ENCODE measurements at regions of chr1 and their contacts with region 1.

Region 1: DNA sequence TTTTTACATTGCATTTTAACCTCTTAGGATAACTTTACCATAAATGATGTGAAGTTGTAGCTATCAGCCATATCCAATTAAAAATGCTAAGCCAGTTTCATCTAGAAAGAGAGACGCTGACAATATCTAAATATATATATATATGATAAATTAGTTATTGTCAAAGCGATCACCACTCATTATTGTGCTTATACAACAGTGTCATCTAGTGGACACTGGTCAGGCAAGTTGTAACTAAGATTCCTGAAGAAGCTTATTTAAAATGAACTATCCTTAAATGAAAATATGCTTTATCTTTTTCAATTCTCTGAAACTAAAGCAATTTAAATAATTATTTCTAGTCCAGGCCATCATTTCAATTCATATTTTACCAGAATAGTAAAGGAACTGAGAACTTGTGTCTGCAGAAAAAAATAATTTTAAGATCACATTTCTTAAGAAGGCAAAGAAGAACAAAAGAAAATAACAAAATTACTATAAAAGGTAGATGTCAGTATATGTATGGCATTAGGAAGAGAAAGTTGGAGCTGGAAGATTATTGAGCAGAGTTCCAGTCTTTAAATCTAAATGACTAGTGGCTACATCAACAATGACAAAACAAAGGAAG is 193.3 kb upstream of the SNX7 start:
- DNase-seq: no peak
- H3K4me3 Mint-ChIP-seq: no peak overlapping the region
- H3K27ac Mint-ChIP-seq: no peak overlapping the region
- H3K4me1 Mint-ChIP-seq: no peaks in the 10 kb centered on the region
- H3K27me3 Mint-ChIP-seq: peaks cover 2% of the 10 kb centered on the region

Region 2: GRCh38 chr1:96966536-96967138 is 1501.6 kb before region 1 on chr1:
- intact Hi-C with region 1: loop called (anchors 1 kb)
- DNase-seq: peak; percentile 43
- H3K4me3 Mint-ChIP-seq: no peak overlapping the region
- H3K27ac Mint-ChIP-seq: no peak overlapping the region
- H3K4me1 Mint-ChIP-seq: no peaks in the 10 kb centered on the region
- H3K27me3 Mint-ChIP-seq: peaks cover 7% of the 10 kb centered on the region

Measured in activated T-helper 1 cell treated with anti-CD3 and anti-CD28 coated beads, Interleukin-12 subunit alpha, Interleukin-12 subunit beta, Interleukin-2, Interleukin-4 antibody, amounts not matched to agents 30 ng/mL and 10 ng/mL and 1 ng/mL, durations not matched to agents 14 hours and 24 hours and 36 hours (primary cell).